ENCODE measurements at regions of chr2 and their contacts with region 1.

Region 1: GRCh38 chr2:82576656-82577055 is 1882.4 kb downstream of the SUCLG1 start:
- DNase-seq: no peak
- H3K4me3 Mint-ChIP-seq: no peak overlapping the region
- H3K27ac Mint-ChIP-seq: no peak overlapping the region
- H3K4me1 Mint-ChIP-seq: no peaks in the 10 kb centered on the region
- H3K27me3 Mint-ChIP-seq: no peaks in the 10 kb centered on the region

Region 2: GRCh38 chr2:82478641-82479040 is 98.0 kb before region 1 on chr2:
- intact Hi-C with region 1: loop called (anchors 10 kb)
- DNase-seq: no peak
- H3K4me3 Mint-ChIP-seq: no peak overlapping the region
- H3K27ac Mint-ChIP-seq: no peak overlapping the region
- H3K4me1 Mint-ChIP-seq: no peaks in the 10 kb centered on the region
- H3K27me3 Mint-ChIP-seq: no peaks in the 10 kb centered on the region

Measured in activated CD4-positive, alpha-beta T cell treated with anti-CD3 and anti-CD28 coated beads, Interleukin-2, amount 10 ng/mL, durations not matched to agents 24 days and 14 days (primary cell).